ENCODE measurements at regions of chr17 and their contacts with region 1.

Region 1: DNA sequence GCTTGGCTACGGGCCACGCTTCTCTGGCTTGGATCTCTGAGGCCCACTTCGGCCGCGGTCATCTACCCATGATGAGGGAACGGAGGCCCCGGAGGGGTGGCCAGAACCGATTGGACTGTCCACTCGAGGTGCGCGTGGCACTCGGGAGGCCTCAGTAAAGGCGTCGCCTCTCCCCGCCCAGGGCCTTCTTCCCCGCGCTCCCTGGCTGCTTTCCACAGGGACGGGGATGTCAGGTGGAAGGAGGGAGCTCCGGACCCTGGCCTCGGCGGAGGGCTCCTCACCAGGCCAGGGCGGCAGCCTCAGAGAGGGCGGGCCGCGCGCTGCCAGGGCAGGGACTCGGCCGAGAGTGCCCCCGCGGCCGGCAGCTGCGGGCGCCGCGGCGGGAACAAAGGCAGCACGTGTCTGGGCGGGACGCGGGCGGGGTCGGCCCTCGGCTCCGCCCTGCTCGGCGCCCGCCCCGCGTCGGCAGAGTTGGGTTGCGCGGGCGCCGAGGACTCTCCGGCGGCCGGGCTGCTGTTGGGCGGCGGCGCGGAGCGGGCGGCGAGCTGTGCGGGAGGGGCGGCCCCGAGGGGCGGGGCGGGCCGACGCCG is 587 bp upstream of the CDK5R1 start:
- DNase-seq: no peak
- H3K4me3 ChIP-seq: peak overlapping the region; percentile 55 to 85 (median 66)
- H3K27ac ChIP-seq: peak overlapping the region; percentile 82 to 92 (median 86)
- H3K4me1 ChIP-seq: peaks cover 18 to 74% (median 18%) of the 10 kb centered on the region in 3 donors
- H3K27me3 ChIP-seq: no peaks in the 10 kb centered on the region
- CTCF ChIP-seq: no peak
- POLR2A ChIP-seq: peak in 1 of 4 donors; percentile 35

Region 2: DNA sequence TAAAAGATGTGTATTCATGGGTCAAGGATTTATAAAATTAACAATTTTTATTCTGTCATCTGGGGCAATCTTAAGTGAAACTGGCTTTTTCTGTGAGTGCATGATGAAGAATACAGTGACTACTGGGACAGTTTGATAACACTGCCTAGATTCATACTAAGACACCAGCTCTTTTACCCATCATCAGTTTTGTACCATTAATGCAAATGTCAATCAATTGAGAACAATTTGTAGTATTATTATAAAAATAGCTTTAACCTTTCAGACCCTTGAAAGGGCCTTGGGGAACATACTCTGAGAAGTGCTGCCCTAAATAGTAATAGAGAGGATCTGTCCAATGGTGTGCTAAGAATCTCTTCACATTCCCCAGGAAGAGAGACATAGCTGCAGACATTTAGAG is 87.3 kb before region 1 on chr17:
- intact Hi-C with region 1: no loop called
- DNase-seq: no peak
- H3K4me3 ChIP-seq: no peak overlapping the region
- H3K27ac ChIP-seq: no peak overlapping the region
- H3K4me1 ChIP-seq: peaks cover 0 to 3% (median 0%) of the 10 kb centered on the region in 3 donors
- H3K27me3 ChIP-seq: no peaks in the 10 kb centered on the region
- CTCF ChIP-seq: no peak
- POLR2A ChIP-seq: no peak

Region 3: DNA sequence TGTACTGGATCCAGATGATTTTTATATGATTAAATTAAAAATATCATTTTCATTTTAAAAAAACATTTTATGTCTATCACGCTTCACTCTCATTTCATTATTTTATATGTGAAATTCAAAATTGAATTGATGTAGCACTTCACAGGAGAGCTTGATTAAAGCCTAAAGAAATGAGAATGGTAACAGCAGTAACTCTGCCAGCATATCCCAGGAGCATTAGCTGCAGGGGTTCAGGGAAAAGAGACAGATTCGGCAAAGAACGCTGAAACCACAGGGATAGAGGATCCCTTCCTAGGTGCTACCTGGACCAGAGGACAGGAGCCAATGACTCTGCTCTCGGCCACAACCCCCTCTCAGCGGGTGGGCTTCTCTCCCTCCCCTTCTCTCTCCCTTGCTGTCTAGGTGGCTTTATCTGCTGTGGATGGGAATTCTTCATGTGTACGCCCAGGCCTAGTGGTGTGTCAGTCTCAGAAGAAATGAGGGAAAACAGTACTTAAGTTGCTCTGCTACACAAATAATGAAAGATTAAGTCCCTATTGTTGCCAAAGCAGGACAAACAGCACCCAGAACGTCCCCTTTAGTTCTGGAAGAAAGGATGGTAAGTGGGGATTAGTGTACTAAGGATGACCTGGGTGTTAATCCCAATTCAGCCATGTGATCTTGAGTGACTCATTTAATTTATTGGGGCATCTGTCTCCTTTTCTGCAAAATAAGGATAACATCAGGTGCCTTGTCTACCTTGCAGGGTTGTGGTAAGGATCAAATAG is 123.9 kb after region 1 on chr17:
- intact Hi-C with region 1: loop called (anchors 10 kb)
- DNase-seq: no peak
- H3K4me3 ChIP-seq: no peak overlapping the region
- H3K27ac ChIP-seq: peak overlapping the region in 2 of 4 donors; percentile 53 to 64
- H3K4me1 ChIP-seq: peaks cover 0 to 25% (median 4%) of the 10 kb centered on the region in 3 donors
- H3K27me3 ChIP-seq: no peaks in the 10 kb centered on the region
- CTCF ChIP-seq: no peak
- POLR2A ChIP-seq: no peak

Region 4: DNA sequence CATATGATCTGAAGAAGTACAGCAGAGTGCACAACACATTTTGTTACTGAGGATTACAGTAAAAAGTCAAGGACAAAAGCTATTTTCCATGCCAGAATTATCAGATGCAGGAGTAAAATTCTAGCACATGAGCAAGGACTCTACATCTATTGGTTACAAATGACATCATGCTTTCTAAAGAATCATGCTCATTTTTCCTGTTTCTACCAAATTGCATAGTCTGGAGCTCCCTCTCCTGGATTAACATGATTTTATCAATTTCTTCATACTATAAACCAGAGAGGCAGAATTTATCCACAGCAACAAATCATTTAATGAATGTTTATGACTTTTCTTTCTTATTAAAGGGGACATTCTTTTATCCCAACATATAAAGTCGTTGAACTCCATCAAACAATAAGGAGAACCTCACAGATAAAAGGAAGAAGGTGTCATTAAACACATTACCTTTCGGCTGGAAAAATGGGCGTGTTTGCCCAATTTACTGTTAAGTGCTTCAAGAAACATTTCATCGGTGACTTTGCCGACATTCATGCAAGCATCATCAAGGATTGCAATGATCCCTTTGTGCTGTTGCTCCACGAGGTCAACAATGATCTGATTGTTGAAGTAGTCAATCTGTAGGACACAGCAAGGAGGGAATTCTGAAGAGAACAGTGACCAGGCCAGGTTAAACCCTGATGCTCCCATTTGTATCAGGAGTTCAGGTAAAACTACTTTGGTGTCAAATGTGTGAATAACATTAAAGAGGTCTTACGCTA is 269.0 kb after region 1 on chr17:
- intact Hi-C with region 1: loop called (anchors 10 kb)
- DNase-seq: no peak
- H3K4me3 ChIP-seq: no peak overlapping the region
- H3K27ac ChIP-seq: no peak overlapping the region
- H3K4me1 ChIP-seq: no peaks in the 10 kb centered on the region
- H3K27me3 ChIP-seq: no peaks in the 10 kb centered on the region
- CTCF ChIP-seq: peak in 5 of 6 experiments; percentile 21 to 62 (median 52)
- POLR2A ChIP-seq: no peak

Measured in esophagus squamous epithelium (tissue), 5 donors.